Ascending aorta (tissue), 2 donors: ENCODE measurements at regions of chr9 and their contacts with region 1.

Region 1: DNA sequence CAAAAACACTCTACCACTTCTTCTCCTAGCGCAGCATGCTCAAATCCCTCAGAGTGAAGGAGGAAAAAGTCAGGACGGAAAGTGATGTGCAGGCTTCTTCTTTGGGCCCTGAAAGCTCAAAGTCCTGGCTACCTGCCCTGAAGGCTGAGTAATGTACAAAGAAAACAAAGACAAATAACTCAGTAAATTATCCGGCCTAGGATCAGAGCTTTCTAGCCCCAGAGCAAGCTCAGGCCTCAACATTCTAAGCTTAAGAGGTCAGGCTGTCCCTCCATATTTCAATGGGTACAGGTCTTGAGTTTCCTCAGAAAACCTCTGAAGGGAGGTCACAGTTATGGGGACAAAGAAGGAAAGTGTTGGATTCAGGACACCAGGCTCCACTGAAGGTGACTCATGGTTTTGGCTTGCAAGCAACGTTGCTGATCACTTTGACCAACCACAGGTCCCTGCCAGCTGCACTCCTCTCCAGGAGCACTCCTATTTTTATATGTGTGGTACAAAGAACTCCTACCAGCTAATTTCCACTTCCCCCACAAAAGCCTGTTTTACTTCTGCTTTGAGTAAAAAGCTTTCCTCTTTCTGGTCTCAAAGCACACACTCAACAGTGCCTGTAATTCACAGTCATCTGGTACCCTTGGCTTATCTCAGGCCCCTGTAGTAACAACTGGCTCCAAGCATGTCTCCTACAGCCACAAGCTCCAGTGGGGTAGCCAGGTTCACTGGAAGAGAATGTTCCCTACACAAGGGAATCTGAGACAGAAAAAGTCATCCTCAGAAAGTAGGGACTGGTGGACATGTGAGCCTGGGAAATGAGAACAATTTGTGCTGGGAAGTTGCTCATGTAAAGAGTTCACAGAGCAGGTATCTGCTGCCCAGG is 115.7 kb downstream of the UGCG start:
- DNase-seq: peak in 1 of 2 donors; percentile 86
- H3K4me3 ChIP-seq: no peak overlapping the region
- H3K27ac ChIP-seq: peak overlapping the region; percentile 71 to 89
- H3K4me1 ChIP-seq: peaks cover 2 to 16% of the 10 kb centered on the region in 2 donors
- H3K27me3 ChIP-seq: no peaks in the 10 kb centered on the region
- CTCF ChIP-seq: no peak

Region 2: GRCh38 chr9:112050544-112051475 is 38.5 kb after region 1 on chr9:
- intact Hi-C with region 1: no loop called
- DNase-seq: peak in 1 of 2 donors; percentile 78
- H3K4me3 ChIP-seq: no peak overlapping the region
- H3K27ac ChIP-seq: no peak overlapping the region
- H3K4me1 ChIP-seq: peaks cover 0 to 17% of the 10 kb centered on the region in 2 donors
- H3K27me3 ChIP-seq: no peaks in the 10 kb centered on the region
- CTCF ChIP-seq: no peak

Region 3: DNA sequence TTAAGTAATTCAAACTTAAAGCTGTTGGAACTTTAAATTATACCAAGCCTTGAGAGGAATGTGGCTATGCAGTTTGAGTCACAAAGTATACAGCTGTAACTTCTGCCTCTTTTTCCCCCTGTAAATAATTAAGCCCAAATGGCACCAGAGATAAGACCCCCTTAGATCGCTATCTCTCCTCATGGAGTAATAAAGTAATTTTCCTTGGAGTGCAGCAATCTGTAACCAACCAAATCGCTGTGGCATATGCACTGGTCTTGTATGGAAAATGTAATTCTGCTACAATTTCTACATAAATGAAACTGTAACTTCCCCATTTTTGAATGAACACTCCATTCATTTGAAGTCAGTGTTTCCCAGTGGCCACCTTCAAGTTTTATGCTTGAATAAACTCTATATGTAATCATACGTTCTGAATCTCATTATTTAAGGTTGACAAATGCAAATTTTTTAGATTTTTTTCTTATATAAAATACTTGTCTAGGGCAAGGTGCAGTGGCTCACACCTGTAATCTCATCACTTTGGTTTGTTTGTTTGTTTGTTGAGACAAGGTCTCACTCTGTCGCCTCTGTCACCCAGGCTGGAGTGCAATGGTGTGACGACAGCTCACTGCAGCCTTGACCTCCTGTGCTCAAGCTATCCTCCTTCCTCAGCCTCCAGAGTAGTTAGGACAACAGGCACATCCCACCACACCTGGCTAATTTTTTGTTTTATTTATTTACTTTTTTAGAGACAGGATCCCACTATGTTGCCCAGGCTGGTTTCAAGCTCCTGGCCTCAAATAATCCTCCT is 150.6 kb after region 1 on chr9:
- intact Hi-C with region 1: no loop called
- DNase-seq: no peak
- H3K4me3 ChIP-seq: no peak overlapping the region
- H3K27ac ChIP-seq: no peak overlapping the region
- H3K4me1 ChIP-seq: no peaks in the 10 kb centered on the region
- H3K27me3 ChIP-seq: no peaks in the 10 kb centered on the region
- CTCF ChIP-seq: no peak

Region 4: DNA sequence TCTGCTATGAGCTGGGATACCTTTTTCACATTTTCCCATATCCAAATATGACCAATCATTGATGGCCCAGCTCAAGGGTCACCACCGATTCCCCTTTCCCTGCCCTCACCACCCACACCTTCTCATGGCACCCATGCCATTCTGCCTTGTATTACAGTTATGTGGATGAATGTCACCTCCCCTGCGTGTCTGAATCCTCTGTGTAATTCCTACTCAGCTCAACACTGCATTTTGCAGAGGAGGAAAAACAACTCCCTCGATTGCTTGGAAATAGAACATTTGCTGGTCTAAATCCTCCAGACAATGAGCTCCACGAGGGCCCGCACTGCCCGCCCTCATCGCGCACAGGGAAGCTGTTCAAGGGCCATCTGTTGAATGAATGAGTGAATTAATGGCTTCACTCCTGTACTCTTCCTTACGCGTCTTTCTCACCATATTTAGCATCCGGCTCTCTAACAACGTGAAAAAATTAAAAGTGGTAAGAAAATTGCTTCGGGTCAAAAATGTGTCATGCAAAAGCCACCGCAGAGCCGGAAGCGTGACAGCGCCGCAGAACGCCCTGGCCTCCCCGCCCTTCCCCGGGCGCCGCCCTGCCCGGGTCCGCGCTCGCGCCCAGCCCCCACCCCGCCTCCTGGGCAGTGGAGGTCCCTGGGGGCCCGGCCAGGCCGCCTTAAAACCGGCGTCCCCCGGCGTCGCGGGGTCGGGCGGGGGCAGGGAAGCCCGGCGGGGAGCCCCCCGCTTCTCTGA is 162.1 kb after region 1 on chr9:
- intact Hi-C with region 1: loop called (anchors 10 kb)
- DNase-seq: peak in 1 of 2 donors; percentile 83
- H3K4me3 ChIP-seq: peak overlapping the region; percentile 76 to 78
- H3K27ac ChIP-seq: peak overlapping the region; percentile 12 to 43
- H3K4me1 ChIP-seq: peaks cover 0 to 6% of the 10 kb centered on the region in 2 donors
- H3K27me3 ChIP-seq: no peaks in the 10 kb centered on the region
- CTCF ChIP-seq: no peak

Region 5: DNA sequence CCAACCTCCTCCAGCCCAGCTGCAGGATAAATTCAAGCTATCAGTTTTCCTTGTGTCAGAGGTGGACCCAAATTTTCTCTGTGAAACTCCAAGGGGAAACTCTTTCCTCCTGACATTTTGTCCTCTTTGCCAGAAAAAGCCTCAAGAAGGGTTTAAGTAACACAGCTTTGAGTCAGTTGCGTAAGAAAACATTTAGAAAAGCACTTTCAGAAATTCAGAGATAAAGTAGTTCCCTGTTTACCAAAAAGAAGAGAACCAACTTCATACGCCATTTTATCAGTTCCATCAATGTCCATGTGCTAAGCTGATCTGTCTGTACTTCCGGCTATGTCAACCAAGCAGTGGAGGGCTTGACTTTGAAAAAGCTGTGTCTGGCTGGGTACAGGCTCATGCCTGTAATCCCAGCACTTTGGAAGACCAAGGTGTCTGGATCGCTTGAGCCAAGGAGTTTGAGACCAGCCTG is 182.7 kb after region 1 on chr9:
- intact Hi-C with region 1: no loop called
- DNase-seq: no peak
- H3K4me3 ChIP-seq: peak overlapping the region in 1 of 2 donors; percentile 16
- H3K27ac ChIP-seq: peak overlapping the region; percentile 62 to 70
- H3K4me1 ChIP-seq: peaks cover 0 to 5% of the 10 kb centered on the region in 2 donors
- H3K27me3 ChIP-seq: no peaks in the 10 kb centered on the region
- CTCF ChIP-seq: no peak